ENCODE measurements at regions of chr3 and their contacts with region 1.

Region 1: DNA sequence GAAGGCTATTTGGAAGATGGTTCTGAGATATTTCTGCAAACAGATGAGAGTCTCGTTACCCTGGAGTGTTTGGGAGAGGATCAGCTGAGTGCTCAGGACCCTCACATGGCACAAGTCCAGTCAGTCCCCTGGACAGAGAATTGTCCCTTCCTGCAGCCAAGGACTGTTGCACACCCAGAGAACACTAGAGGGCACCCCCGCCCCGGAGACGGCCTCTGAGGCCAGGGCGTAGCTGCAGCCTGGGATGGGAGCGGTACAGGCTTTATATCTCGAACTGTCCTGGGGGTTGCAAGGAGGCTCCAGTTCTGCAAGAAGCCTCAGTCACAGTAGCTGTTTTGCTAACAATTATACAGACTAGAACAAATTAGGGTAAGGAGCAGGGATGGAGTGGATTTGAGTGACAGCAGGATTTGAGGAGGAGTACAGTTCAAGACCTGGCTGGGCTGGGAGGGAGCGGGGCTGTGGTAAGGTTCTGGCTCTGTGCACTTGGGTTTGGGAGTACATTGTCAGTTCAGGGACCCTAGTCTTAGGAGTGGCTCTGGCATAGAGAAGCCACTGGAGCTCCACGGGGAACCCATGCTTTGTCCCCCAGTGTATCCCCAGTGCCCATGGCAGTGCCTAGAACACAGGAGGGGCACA is 67.6 kb upstream of the HACD2 start:
- DNase-seq: peak; percentile 51 to 81
- H3K4me3 ChIP-seq: no peak overlapping the region
- H3K27ac ChIP-seq: no peak overlapping the region
- H3K4me1 ChIP-seq: no peaks in the 10 kb centered on the region; the same call in 1 of the 2 replicates
- H3K27me3 ChIP-seq: no peaks in the 10 kb centered on the region
- CTCF ChIP-seq: peak; percentile 92

Region 2: DNA sequence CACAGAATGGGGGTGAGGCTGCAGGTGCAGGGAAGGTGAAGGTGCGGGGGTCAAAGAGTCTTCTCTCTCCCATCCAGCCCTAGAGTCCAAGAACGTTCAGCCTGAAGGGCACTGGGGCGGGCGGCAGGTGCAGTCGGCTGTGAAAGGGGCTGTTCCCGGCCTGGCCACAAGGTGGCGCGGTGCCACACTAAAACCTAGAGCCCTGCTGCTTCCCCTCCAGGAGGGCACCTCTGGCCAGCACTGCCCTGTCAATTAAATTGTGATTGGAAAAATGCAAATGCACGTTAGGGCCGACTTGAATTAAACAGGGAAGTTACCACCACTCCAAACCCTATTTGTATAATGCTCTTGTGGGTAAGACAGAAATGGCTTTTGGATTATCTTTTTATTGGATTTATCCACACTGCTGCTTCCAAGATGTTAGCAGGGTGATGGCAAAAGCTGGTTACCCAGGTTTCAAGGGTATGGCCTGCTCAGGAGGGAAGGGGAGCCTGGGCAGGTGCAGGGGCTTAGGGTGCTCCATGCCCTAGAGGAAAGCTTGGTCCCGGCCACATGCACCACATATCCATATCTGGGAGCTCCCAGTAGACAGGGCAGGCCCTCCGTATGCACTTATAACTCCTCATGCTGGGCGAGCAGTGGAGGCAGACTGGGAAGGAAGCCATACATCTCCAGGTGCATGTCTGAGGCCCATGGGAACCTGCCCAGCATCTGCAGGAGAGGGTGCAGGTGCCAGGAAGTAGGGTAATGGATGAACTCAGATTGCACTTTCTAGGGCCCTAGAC is 323.4 kb before region 1 on chr3:
- CTCF ChIA-PET with region 1: no interaction called
- POLR2A ChIA-PET with region 1: no interaction called
- intact Hi-C with region 1: loop called (anchors 2 kb)
- DNase-seq: peak; percentile 42 to 80
- H3K4me3 ChIP-seq: no peak overlapping the region
- H3K27ac ChIP-seq: no peak overlapping the region
- H3K4me1 ChIP-seq: no peaks in the 10 kb centered on the region
- H3K27me3 ChIP-seq: no peaks in the 10 kb centered on the region
- CTCF ChIP-seq: peak; percentile 91

Region 3: DNA sequence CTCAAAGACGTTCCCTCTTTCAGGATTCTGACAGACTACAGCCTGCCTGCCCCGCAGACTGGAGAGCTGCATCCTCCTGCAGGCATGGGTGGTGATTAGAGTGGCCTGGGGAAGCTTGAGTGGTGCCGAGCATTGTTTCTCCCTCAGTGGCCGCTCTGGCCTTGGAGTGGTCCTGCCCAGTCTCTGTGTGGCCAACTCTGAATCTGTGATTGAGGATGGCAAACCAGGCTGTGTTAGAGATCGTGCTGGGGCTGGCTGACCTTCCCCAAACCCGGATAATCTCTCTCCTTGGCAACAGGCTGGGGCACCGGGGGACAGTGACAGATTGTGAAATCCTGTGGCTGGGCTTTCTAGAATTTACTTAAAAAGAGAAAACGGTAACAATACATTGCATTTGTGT is 192.6 kb before region 1 on chr3:
- CTCF ChIA-PET with region 1: no interaction called
- POLR2A ChIA-PET with region 1: no interaction called
- intact Hi-C with region 1: no loop called
- DNase-seq: no peak
- H3K4me3 ChIP-seq: no peak overlapping the region
- H3K27ac ChIP-seq: no peak overlapping the region
- H3K4me1 ChIP-seq: no peaks in the 10 kb centered on the region
- H3K27me3 ChIP-seq: no peaks in the 10 kb centered on the region
- CTCF ChIP-seq: no peak

Region 4: DNA sequence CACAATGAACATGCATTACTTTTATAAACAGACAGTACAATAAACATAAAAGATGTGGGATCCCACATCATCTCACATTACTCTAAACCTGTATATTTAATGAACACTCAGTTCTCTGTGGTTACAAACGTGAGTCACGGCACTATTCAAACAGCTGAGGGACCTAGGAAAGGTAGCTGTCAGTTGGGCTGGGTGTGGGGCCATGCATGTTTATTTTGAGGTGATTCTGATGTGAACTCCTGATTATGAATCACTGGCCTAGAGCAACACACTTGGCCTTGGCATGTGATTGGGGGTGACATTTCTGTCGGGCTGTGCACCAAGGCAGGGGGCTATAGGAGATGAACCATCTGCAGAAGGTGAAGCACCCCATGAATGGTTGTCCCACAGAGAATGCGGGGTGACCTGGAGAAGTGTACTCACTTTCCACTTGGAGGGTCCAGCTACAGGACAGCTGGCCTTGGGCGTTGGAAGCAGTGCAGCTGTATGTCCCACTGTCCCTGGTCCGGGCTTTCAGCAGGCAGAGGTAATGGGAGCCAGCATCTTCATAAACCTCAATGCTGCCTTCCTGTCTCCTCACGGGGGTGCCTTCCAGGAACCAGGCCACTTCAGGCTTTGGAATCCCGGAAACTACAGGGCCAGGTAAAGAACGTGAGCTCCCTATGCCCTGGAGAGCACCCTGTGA is 80.2 kb after region 1 on chr3:
- CTCF ChIA-PET with region 1: interaction called, 12 read pairs
- POLR2A ChIA-PET with region 1: no interaction called
- intact Hi-C with region 1: no loop called
- DNase-seq: peak; percentile 68 to 91
- H3K4me3 ChIP-seq: no peak overlapping the region
- H3K27ac ChIP-seq: no peak overlapping the region
- H3K4me1 ChIP-seq: peaks cover 36% of the 10 kb centered on the region
- H3K27me3 ChIP-seq: 0 out of 2 replicates have a peak, but pooled peaks cover 2% of the 10 kb centered on the region
- CTCF ChIP-seq: no peak

Region 5: DNA sequence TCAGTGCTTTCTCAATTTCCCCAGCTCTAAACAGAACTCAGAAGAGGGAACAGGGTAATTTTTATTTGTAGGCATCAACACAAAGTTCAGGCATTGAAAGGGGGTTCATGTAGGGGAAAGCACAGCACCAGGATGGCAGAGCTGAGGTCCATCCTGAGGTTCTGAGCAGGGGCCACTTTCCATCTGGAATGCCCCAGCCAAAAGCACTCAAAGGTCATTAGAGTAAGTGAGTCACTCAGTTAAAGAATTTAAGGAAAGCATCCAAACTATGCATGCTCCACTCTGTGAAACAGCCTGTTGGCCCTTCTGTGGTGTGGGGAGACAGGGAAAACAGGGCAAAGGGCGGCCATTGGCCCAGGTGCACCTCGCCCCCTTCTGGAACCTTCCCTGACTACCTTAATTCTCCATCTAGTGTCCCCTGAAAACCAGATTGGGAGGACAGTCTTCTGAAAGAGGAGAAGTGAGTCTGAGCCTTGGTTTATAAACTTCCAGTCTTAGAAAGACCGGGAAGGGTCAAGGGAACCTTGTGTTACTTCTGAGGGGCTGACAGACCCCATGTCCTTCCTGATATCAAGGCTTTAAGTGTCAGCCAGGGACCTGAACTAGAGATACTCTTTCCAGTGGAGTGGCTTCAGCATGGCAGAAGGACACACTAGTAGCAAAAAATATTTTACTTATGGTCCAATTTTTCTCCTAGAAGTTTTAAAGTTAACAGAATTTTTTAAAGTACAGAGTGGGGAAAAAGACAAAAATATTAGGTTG is 98.4 kb after region 1 on chr3:
- CTCF ChIA-PET with region 1: no interaction called
- POLR2A ChIA-PET with region 1: no interaction called
- intact Hi-C with region 1: no loop called
- DNase-seq: peak; percentile 66 to 87
- H3K4me3 ChIP-seq: no peak overlapping the region
- H3K27ac ChIP-seq: peak overlapping the region; percentile 81
- H3K4me1 ChIP-seq: peaks cover 30% of the 10 kb centered on the region
- H3K27me3 ChIP-seq: no peaks in the 10 kb centered on the region
- CTCF ChIP-seq: no peak; the same call in 1 of the 2 replicates

Region 6: DNA sequence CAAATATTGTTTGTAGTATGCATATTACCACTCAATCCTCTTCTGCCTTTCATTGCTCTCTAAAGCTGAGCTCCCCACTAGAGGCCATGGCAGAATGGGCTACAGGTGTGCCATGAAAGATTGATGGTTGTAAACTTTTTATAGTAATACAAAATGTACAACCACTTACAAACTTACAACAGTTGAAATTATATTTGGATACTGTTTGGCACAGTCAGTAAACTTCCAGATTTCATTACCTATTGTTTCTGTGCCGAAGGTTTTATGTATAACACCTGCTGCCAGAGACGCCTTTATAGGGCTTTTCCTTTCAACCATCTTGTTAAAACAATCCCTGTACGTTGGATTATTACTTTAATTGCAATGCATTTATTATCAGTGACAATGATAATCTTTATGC is 332.5 kb after region 1 on chr3:
- CTCF ChIA-PET with region 1: interaction called, 3 read pairs
- POLR2A ChIA-PET with region 1: no interaction called
- intact Hi-C with region 1: loop called (anchors 5 kb)
- DNase-seq: no peak
- H3K4me3 ChIP-seq: no peak overlapping the region
- H3K27ac ChIP-seq: no peak overlapping the region
- H3K4me1 ChIP-seq: no peaks in the 10 kb centered on the region
- H3K27me3 ChIP-seq: peaks cover 80% of the 10 kb centered on the region
- CTCF ChIP-seq: no peak

Region 7: DNA sequence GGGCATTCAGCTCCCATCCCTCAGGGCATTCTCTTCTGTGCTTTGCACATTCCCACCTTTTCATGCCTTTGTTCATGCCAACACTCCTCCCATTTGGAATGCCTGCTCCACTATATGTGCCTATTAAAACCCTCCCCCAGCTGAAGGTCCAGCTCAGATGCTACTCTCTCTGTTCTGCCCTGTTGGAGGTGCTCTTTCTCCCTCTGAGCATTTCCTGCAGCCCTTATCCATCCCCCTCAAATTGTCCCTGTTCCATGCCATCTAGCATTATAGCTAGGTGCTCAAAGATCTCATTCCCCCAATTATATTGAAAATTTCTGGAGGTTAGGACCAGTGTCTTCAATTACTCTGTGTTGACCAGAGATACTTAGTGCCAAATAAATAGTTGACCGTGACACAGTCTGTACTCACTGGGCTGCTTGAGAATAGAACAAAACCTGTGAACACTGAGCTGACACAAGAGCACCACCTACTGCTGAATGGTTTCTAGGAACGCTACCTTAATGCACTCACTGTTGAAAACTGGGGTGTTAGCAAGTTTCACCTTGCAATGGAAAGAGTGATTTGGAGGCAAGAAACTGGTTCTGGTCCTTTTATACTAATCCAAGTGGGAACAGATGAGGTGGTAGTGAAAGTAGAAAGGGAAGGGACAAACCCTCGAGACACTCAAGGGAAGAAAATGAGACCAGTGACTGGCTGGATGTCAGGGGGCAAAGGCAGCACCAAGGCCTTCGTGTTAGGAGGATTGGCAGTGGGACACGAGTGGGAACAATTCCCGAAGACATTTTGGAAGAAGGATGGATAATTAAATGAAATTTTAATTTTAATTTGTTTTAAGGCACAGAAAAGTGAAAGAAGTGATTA is 629.2 kb after region 1 on chr3:
- CTCF ChIA-PET with region 1: no interaction called
- POLR2A ChIA-PET with region 1: no interaction called
- intact Hi-C with region 1: loop called (anchors 5 kb)
- DNase-seq: no peak
- H3K4me3 ChIP-seq: no peak overlapping the region
- H3K27ac ChIP-seq: no peak overlapping the region
- H3K4me1 ChIP-seq: no peaks in the 10 kb centered on the region
- H3K27me3 ChIP-seq: peaks cover 31% of the 10 kb centered on the region
- CTCF ChIP-seq: peak; percentile 47; the same call in 1 of the 2 replicates

Measured in PC-9 (cell line).